ENCODE measurements at regions of chr11 and their contacts with region 1.

Region 1: DNA sequence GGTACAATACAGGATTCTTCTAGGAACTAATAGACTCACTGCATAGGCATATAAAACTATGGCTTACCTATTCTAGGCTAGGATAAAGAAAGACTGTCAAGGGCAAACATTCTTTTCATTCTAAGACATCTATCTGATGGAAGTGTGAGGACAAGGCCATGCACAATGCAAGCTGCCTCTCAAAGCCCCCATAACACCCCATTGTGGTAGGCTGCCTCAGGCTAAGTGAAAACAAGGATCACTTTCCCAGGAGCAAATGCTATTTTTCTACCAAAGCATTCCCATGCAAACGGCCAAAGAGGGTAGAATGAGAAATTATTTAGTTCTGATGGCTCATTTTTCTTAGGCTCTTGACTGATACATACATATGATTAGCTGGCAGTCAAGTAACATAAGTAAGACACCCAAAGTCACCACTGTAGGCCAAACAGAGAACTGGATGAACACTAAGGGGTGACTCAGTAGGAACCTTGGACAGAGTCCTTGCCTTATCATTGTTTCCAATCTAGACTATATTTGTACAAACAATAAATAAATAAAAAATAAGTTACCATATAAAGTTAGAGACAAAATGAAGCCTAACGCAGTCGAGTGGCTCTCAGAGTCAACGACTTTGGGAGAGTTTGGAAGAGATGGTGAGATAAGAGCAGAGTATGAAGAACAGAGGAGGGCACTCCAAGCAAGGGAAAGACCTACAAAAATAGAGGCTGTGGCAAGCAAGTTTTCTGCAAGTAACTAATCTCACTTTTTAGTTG is 303.6 kb downstream of the SBF2 start:
- DNase-seq: no peak
- ATAC-seq: peak; percentile 56
- H3K4me3 ChIP-seq: no peak overlapping the region
- H3K27ac ChIP-seq: no peak overlapping the region
- H3K4me1 ChIP-seq: no peaks in the 10 kb centered on the region
- H3K27me3 ChIP-seq: no peaks in the 10 kb centered on the region

Region 2: GRCh38 chr11:9703280-9703679 is 287.1 kb before region 1 on chr11:
- intact Hi-C with region 1: no loop called
- DNase-seq: no peak
- ATAC-seq: no peak
- H3K4me3 ChIP-seq: no peak overlapping the region
- H3K27ac ChIP-seq: no peak overlapping the region
- H3K4me1 ChIP-seq: peaks cover 2 to 4% of the 10 kb centered on the region in 2 donors
- H3K27me3 ChIP-seq: no peaks in the 10 kb centered on the region

Region 3: GRCh38 chr11:10122326-10123197 is 132.2 kb after region 1 on chr11:
- intact Hi-C with region 1: no loop called
- DNase-seq: no peak
- ATAC-seq: peak; percentile 36
- H3K4me3 ChIP-seq: no peak overlapping the region
- H3K27ac ChIP-seq: no peak overlapping the region
- H3K4me1 ChIP-seq: peaks cover 0 to 3% of the 10 kb centered on the region in 2 donors
- H3K27me3 ChIP-seq: no peaks in the 10 kb centered on the region

Region 4: GRCh38 chr11:10322830-10323792 is 332.7 kb after region 1 on chr11:
- intact Hi-C with region 1: loop called in 1 of 2 experiments (anchors 5 kb)
- DNase-seq: peak in 1 of 2 donors; percentile 72
- ATAC-seq: peak; percentile 82
- H3K4me3 ChIP-seq: no peak overlapping the region
- H3K27ac ChIP-seq: peak overlapping the region; percentile 86 to 96
- H3K4me1 ChIP-seq: peaks cover 6 to 7% of the 10 kb centered on the region in 2 donors
- H3K27me3 ChIP-seq: no peaks in the 10 kb centered on the region

Measured in aorta (tissue), 5 donors.